Mammary epithelial cell (primary cell): ENCODE measurements at regions of chr1 and their contacts with region 1.

Region 1: DNA sequence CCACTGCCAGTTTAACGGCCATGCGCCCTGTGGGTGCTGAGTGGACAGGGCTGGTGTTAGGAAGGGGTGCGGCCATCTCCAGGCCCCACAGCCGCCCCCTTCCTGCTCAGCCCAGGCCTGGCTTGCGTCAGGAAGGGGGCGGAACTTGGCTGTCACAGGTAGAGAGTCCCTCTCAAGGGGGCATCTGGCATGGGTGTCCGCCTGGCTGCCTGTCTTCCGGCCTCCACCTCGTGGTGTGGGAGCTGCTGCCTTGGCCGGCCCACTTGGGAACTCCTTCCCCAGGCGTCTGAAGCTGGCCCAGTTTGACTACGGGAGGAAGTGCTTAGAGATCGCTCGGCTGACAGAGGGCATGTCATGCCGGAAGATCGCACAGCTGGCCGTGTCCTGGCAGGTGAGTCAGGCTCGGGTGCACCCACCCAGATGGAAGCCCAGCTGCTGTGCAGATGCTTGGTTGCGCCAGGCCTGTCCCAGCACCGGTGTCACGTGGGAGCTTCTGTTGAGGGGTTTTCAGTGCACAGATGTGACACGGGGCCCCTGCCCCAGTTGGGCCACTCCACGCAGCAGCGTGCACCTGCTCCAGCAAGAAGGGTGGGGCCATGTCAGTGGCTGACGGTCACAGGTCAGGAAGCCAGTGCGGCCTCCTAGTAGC is 9.1 kb upstream of the ATAD3B start:
- DNase-seq: peak; percentile 68
- H3K4me3 ChIP-seq: peak overlapping the region in 1 of 3 experiments; percentile 4
- H3K27ac ChIP-seq: no peak overlapping the region
- H3K4me1 ChIP-seq: peaks cover 17% of the 10 kb centered on the region
- H3K27me3 ChIP-seq: no peaks in the 10 kb centered on the region
- CTCF ChIP-seq: no peak

Region 2: DNA sequence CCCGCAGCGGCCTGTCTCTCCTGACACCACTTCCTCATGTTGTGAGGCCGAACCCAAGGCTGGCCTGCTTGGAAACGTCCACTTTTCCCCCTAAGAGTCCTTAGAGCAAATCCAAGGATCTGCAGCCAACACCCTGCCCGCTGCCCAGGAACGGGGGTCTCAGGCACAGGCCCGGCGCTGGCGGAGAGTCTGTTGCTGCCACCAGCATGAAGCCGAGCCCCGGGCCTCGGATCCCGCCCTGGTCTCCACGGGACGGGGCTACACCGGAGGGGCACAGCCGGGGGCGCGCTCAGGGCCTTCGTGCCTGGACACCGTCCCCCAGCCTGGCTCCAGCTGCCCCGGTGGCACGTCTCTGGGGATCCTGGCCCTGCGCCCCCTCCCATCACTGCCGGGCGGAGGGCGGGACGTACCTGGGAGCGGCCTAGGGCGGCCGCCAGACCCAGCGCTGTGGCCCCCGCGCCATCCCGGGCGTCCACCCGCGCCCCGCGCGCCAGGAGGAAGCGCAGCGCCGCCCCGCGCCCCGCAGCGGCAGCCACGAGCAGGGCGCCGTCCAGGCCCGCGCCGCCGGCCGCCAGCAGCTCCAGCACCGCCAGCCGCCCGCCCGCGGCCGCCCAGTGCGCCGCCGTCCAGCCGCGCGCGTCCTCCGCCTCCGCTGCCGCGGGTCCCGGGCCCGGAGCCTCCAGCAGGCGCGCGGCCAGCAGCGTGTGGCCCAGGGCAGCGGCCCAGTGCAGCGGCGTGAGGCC is 42.6 kb before region 1 on chr1:
- CTCF ChIA-PET with region 1: no interaction called
- dilution Hi-C with region 1: loop called (anchors 5 kb)
- in situ Hi-C with region 1: no loop called
- intact Hi-C with region 1: no loop called
- DNase-seq: no peak
- H3K4me3 ChIP-seq: peak overlapping the region in 2 of 3 experiments; percentile 34 to 37
- H3K27ac ChIP-seq: no peak overlapping the region
- H3K4me1 ChIP-seq: peaks cover 43% of the 10 kb centered on the region
- H3K27me3 ChIP-seq: no peaks in the 10 kb centered on the region
- CTCF ChIP-seq: no peak

Region 3: DNA sequence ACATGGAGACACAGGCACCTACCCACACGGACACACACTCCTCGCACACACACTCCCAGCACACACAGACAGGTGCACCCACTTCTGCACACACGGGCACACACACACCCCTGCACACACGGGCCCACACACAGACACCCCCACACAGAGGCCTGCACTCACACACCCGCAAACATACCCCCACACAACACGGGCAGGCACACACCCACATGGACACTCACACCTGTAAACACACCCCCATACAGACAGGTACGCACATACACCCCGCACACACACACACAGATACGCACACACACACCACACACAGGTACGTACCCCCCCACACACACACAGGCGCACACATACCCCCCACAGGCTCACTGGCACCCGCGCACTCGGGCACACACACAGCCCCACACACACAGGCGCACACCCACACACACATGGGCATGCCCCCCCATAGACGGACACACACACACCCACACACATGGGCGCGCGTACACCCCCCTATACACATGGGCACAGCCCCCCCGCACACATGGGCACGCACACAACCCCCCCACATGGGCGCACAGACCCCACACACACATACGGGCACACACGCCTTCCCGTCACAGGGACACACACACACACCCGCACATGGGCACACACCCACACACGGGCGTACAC is 55.7 kb after region 1 on chr1:
- CTCF ChIA-PET with region 1: no interaction called
- dilution Hi-C with region 1: loop called (anchors 5 kb)
- in situ Hi-C with region 1: no loop called
- intact Hi-C with region 1: no loop called
- DNase-seq: no peak
- H3K4me3 ChIP-seq: no peak overlapping the region
- H3K27ac ChIP-seq: no peak overlapping the region
- H3K4me1 ChIP-seq: peaks cover 2% of the 10 kb centered on the region
- H3K27me3 ChIP-seq: no peaks in the 10 kb centered on the region
- CTCF ChIP-seq: no peak